Activated CD4-positive, alpha-beta T cell treated with anti-CD3 and anti-CD28 coated beads for 36 hours (primary cell): ENCODE measurements at regions of chr5 and their contacts with region 1.

Region 1: DNA sequence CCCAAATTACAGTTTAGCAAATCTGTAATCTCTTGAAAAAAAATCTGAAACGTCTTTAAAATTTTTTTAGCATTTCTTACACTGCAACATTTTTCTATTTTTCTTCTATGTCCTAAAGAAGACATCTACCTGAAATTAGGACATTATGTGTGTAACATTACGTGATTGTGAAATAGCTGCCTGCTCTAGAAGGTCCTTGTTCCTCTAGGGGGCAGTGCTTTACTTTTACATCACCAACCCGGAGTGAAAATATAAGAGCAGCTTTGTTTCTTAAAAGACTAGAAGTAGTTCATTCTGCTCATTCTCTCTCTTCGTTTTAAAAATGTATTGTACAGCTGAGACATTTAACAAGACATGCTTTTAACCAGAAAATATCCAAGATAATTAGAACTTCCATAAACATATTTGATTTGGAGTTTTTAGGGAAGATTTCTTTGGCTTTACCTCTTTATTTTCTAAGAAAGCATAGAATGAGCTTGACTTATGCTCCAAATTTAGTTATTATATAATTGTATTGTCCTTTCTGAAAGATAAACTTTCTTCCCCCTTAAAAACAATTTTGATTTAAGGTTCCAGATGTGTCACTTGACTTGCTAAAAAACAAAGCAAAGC is 48.1 kb upstream of the RIOK2 start:
- DNase-seq: peak; percentile 25
- ATAC-seq: peak; percentile 69
- H3K4me3 Mint-ChIP-seq: no peak overlapping the region
- H3K27ac Mint-ChIP-seq: no peak overlapping the region
- H3K4me1 Mint-ChIP-seq: no peaks in the 10 kb centered on the region
- H3K27me3 Mint-ChIP-seq: peaks cover 4% of the 10 kb centered on the region

Region 2: GRCh38 chr5:96633820-96634219 is 597.3 kb before region 1 on chr5:
- CTCF ChIA-PET with region 1: no interaction called
- POLR2A ChIA-PET with region 1: no interaction called
- intact Hi-C with region 1: no loop called
- DNase-seq: no peak
- ATAC-seq: no peak
- H3K4me3 Mint-ChIP-seq: no peak overlapping the region
- H3K27ac Mint-ChIP-seq: no peak overlapping the region
- H3K4me1 Mint-ChIP-seq: no peaks in the 10 kb centered on the region
- H3K27me3 Mint-ChIP-seq: peaks cover 11% of the 10 kb centered on the region

Region 3: DNA sequence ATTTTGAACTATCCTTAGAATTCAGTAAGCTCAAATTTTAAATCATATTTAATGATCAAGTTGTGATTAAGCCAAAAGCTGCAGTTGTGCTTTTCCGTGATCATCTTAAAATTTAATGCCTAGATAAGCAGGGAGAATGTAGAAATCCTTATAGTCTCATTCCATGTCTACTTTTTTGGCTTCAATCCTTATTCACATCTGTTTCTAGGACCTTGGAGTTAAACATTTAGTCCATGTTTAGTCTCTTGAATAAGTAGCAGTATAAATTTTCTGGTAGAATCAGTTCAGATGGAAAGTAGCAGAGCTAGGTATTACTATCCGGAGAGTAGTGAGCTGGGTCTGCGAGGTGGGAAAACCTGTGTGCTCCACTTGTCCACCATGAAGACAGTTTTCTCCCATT is 11.2 kb after region 1 on chr5:
- CTCF ChIA-PET with region 1: interaction called, 11 read pairs
- POLR2A ChIA-PET with region 1: no interaction called
- intact Hi-C with region 1: no loop called
- DNase-seq: no peak
- ATAC-seq: no peak
- H3K4me3 Mint-ChIP-seq: no peak overlapping the region
- H3K27ac Mint-ChIP-seq: no peak overlapping the region
- H3K4me1 Mint-ChIP-seq: no peaks in the 10 kb centered on the region
- H3K27me3 Mint-ChIP-seq: no peaks in the 10 kb centered on the region

Region 4: GRCh38 chr5:97534166-97534565 is 303.0 kb after region 1 on chr5:
- CTCF ChIA-PET with region 1: interaction called, 15 read pairs
- POLR2A ChIA-PET with region 1: no interaction called
- intact Hi-C with region 1: loop called in 1 of 2 experiments (anchors 1 kb)
- DNase-seq: no peak
- ATAC-seq: peak; percentile 36
- H3K4me3 Mint-ChIP-seq: no peak overlapping the region
- H3K27ac Mint-ChIP-seq: no peak overlapping the region
- H3K4me1 Mint-ChIP-seq: no peaks in the 10 kb centered on the region
- H3K27me3 Mint-ChIP-seq: peaks cover 3% of the 10 kb centered on the region

Region 5: GRCh38 chr5:98349251-98349995 is 1118.3 kb after region 1 on chr5:
- CTCF ChIA-PET with region 1: no interaction called
- POLR2A ChIA-PET with region 1: no interaction called
- intact Hi-C with region 1: loop called in 1 of 2 experiments (anchors 1 kb)
- DNase-seq: no peak
- ATAC-seq: no peak
- H3K4me3 Mint-ChIP-seq: no peak overlapping the region
- H3K27ac Mint-ChIP-seq: no peak overlapping the region
- H3K4me1 Mint-ChIP-seq: no peaks in the 10 kb centered on the region
- H3K27me3 Mint-ChIP-seq: no peaks in the 10 kb centered on the region

Region 6: DNA sequence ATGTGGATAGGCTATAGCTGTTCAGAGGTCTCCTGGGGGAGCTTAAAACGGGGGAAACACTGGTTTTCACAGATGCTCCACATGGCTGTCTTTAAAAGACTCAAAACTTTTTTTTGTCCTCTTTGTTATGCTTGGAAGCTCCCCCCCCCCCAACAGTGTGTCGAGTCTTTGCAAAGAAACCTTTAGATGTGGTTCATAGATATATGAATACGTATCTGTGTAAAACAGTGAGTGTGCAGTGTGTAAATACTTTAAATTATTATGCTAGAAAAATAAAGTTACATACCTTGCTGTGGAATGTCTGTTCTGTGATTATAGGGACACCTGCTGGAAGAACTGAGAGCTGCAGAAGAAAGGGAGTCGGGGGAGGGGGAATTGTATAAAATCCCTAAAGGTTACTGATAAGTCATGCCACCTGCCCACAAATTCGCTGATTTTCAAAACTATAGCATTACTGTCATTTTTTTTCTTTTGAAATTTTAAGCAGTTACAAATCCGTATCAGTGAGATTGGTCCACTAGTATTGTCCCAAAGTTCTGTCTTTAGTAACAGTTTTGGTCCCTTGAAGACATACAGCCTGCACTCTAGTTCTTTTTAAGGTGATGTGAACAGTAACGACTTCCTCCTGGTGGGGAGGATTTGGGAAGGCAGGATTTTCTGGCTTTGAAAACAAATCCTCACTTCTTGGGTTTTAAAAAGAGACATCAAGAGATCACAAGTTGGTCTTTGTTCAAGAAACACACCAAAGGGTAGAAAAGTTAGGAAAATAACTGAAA is 1565.3 kb after region 1 on chr5:
- CTCF ChIA-PET with region 1: interaction called, 6 read pairs
- POLR2A ChIA-PET with region 1: no interaction called
- intact Hi-C with region 1: loop called in 1 of 2 experiments (anchors 2 kb)
- DNase-seq: peak; percentile 68
- ATAC-seq: peak; percentile 84
- H3K4me3 Mint-ChIP-seq: no peak overlapping the region
- H3K27ac Mint-ChIP-seq: no peak overlapping the region
- H3K4me1 Mint-ChIP-seq: peaks cover 6% of the 10 kb centered on the region
- H3K27me3 Mint-ChIP-seq: no peaks in the 10 kb centered on the region

Region 7: GRCh38 chr5:98827161-98827560 is 1596.0 kb after region 1 on chr5:
- CTCF ChIA-PET with region 1: interaction called, 3 read pairs
- POLR2A ChIA-PET with region 1: no interaction called
- intact Hi-C with region 1: loop called in 1 of 2 experiments (anchors 10 kb)
- DNase-seq: no peak
- ATAC-seq: no peak
- H3K4me3 Mint-ChIP-seq: no peak overlapping the region
- H3K27ac Mint-ChIP-seq: no peak overlapping the region
- H3K4me1 Mint-ChIP-seq: no peaks in the 10 kb centered on the region
- H3K27me3 Mint-ChIP-seq: no peaks in the 10 kb centered on the region